Ascending aorta (tissue), 2 donors: ENCODE measurements at regions of chr5 and their contacts with region 1.

Region 1: GRCh38 chr5:78648359-78649210 is at the start of gene LHFPL2:
- DNase-seq: peak; percentile 39 to 86
- H3K4me3 ChIP-seq: peak within 1 kb of the TSS; percentile 76 to 94
- H3K27ac ChIP-seq: peak within 1 kb of the TSS; percentile 98 to 99
- H3K4me1 ChIP-seq: peaks cover 4 to 35% of the 10 kb centered on the region in 2 donors
- H3K27me3 ChIP-seq: no peaks in the 10 kb centered on the region
- CTCF ChIP-seq: no peak
- total RNA-seq, gene LHFPL2: 9.7 TPM

Region 2: GRCh38 chr5:78294248-78295034 is 354.1 kb before region 1 on chr5 and contains the start of gene AP3B1:
- intact Hi-C with region 1: loop called (anchors 10 kb)
- DNase-seq: peak; percentile 98 to 100
- H3K4me3 ChIP-seq: peak within 1 kb of the TSS; percentile 86 to 97
- H3K27ac ChIP-seq: peak within 1 kb of the TSS; percentile 84 to 87
- H3K4me1 ChIP-seq: peaks cover 0 to 11% of the 10 kb centered on the region in 2 donors
- H3K27me3 ChIP-seq: no peaks in the 10 kb centered on the region
- CTCF ChIP-seq: no peak
- total RNA-seq, gene AP3B1: 37.3 TPM

Region 3: GRCh38 chr5:78527054-78527859 is 121.3 kb before region 1 on chr5:
- intact Hi-C with region 1: loop called (anchors 5 kb)
- DNase-seq: peak; percentile 79 to 96
- H3K4me3 ChIP-seq: peak overlapping the region; percentile 3 to 33
- H3K27ac ChIP-seq: peak overlapping the region; percentile 74 to 89
- H3K4me1 ChIP-seq: peaks cover 26 to 66% of the 10 kb centered on the region in 2 donors
- H3K27me3 ChIP-seq: no peaks in the 10 kb centered on the region
- CTCF ChIP-seq: no peak

Region 4: DNA sequence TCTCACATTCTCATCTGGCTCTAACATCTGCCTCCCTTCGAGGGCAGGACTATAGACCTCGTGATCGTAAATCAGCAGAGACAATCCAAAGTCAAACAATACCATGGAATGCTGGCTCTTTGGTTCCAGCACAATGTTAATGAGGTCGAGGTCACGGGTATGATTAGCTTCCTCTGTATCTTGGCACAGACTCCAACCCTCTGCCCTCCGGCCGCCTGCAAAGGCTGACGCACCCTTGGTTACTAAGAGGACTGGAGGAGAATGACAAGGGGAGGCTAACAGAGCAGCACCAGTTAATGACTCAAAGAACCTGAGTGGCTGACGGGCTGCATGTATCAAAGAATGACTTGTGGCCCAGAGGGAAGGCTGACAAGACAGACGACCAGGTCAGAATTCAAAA is 10.2 kb before region 1 on chr5:
- intact Hi-C with region 1: loop called (anchors 1 kb)
- DNase-seq: peak; percentile 33 to 81
- H3K4me3 ChIP-seq: no peak overlapping the region
- H3K27ac ChIP-seq: no peak overlapping the region
- H3K4me1 ChIP-seq: peaks cover 0 to 35% of the 10 kb centered on the region in 2 donors
- H3K27me3 ChIP-seq: no peaks in the 10 kb centered on the region
- CTCF ChIP-seq: no peak

Region 5: DNA sequence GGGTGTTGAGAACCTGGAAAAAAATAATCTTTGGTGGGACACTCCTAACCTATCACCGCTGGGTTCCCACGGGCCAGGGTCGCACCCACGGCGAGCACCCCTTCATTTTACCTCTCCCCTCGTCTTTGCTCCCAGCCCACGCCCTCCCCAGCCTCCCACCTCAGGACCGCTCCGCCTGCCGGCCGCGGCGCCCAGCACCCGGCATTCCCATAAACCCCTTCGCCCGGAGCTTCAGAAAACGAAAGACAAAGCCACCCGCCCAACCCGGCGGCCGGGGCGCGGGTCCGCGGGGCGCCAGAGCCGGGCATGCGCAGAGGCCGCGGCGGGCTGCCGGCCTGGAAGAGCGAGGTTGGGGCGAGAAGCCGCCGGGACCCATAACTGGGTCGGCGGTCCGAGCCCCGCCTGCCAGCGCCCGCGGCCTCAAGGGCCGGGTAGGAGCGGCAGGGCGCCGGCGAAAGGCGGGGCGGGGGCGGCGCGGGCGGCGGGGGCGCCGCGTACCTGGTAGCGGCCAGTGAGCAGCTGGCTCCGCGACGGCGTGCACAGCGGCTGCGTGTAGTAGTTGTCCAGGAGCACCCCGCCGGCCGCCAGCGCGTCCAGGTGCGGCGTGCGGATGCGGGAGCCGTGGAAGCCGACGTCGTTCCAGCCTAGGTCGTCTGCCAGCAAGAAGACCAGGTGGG is 336.0 kb after region 1 on chr5:
- intact Hi-C with region 1: loop called (anchors 10 kb)
- DNase-seq: peak; percentile 52 to 92
- H3K4me3 ChIP-seq: peak overlapping the region; percentile 89 to 95
- H3K27ac ChIP-seq: peak overlapping the region; percentile 96
- H3K4me1 ChIP-seq: peaks cover 0 to 12% of the 10 kb centered on the region in 2 donors
- H3K27me3 ChIP-seq: no peaks in the 10 kb centered on the region
- CTCF ChIP-seq: peak; percentile 28 to 48 (median 40)

Region 6: DNA sequence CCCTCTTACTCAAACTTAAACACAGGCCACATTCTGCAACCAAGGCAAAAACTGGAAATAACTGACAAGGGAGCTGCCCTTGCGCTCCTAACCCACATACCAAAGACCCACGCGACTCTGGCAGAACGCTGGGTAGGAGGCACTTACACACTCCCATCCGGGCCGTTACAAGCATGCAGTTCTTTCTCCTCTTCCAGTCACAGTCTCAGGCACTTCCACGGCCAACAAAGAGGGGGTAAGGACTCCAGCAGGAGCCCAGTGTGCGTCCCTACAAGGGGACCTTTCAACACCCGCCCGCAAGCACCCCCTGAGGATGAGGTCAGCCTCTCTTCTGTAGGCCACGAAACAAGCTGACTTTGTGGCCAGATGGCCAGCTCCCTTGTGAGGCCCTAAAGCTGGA is 1549.8 kb after region 1 on chr5:
- intact Hi-C with region 1: no loop called
- DNase-seq: no peak
- H3K4me3 ChIP-seq: no peak overlapping the region
- H3K27ac ChIP-seq: peak overlapping the region; percentile 35 to 43
- H3K4me1 ChIP-seq: peaks cover 0 to 2% of the 10 kb centered on the region in 2 donors
- H3K27me3 ChIP-seq: no peaks in the 10 kb centered on the region
- CTCF ChIP-seq: no peak